Caco-2 (cell line): ENCODE measurements at regions of chr18 and their contacts with region 1.

Region 1: DNA sequence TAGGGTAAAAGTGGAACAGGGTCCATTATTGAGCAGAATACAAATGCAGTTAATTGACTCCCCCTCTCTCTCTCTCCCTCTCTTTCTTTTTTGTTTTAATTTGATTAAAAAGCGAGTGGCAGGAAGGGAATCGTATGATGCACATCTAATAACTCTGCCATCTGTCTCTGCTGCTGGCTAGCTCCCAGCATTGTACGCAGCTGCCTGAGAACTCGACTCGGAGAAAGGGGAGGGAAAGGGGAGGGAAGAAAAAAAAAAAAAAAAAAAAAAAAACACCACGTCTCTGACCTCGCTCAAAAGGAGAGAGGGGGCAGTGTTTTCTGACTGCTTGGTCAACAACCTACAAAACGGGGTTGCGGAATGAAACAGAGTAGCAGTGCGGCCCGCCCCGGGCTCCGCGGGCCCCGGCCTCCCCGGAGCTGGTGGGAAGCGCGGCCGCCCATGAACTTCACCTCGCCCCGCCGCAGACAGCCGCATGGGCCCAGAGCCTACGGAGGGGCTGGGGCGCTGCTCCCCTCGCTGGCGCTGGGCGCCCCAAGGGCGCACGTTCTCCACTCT is 265.7 kb downstream of the TCF4 start:
- DNase-seq: peak; percentile 61 to 65
- H3K4me3 ChIP-seq: peak overlapping the region; percentile 39
- H3K4me3 Mint-ChIP-seq: peak overlapping the region; percentile 89
- H3K27ac Mint-ChIP-seq: peak overlapping the region; percentile 70
- H3K4me1 ChIP-seq: peaks cover 6% of the 10 kb centered on the region
- H3K4me1 Mint-ChIP-seq: peaks cover 8% of the 10 kb centered on the region
- H3K27me3 ChIP-seq: no peaks in the 10 kb centered on the region
- H3K27me3 Mint-ChIP-seq: no peaks in the 10 kb centered on the region
- CTCF ChIP-seq: no peak

Region 2: DNA sequence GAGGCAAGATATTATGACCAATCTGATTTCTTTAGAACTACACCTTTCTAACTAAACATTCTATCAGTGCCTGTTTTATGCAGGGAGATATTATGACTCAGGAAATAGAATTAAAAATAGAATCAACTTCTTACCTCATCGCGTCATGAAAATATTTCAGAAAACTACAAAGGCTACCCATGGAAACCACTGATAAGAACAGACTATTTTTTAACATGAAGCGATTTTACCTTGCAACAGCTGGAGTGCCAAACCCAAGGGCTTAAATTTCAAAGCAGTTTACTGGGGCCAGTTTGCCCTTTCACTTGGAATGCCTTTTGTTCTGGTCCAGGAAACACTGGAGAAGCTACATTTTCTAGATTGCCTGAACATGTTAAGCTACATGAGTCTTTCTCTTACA is 58.1 kb before region 1 on chr18:
- CTCF ChIA-PET with region 1: no interaction called
- POLR2A ChIA-PET with region 1: interaction called, 4 read pairs
- intact Hi-C with region 1: loop called (anchors 5 kb)
- DNase-seq: peak; percentile 49 to 50
- H3K4me3 ChIP-seq: no peak overlapping the region
- H3K4me3 Mint-ChIP-seq: no peak overlapping the region
- H3K27ac Mint-ChIP-seq: peak overlapping the region; percentile 48
- H3K4me1 ChIP-seq: peaks cover 66% of the 10 kb centered on the region
- H3K4me1 Mint-ChIP-seq: peaks cover 8% of the 10 kb centered on the region
- H3K27me3 ChIP-seq: no peaks in the 10 kb centered on the region
- H3K27me3 Mint-ChIP-seq: no peaks in the 10 kb centered on the region
- CTCF ChIP-seq: no peak

Region 3: GRCh38 chr18:55275039-55275901 is 47.0 kb before region 1 on chr18:
- CTCF ChIA-PET with region 1: no interaction called
- POLR2A ChIA-PET with region 1: no interaction called
- intact Hi-C with region 1: loop called (anchors 5 kb)
- DNase-seq: peak in 1 of 2 experiments; percentile 37
- H3K4me3 ChIP-seq: no peak overlapping the region
- H3K4me3 Mint-ChIP-seq: no peak overlapping the region
- H3K27ac Mint-ChIP-seq: no peak overlapping the region
- H3K4me1 ChIP-seq: peaks cover 6% of the 10 kb centered on the region; the same call in 1 of the 2 replicates
- H3K4me1 Mint-ChIP-seq: no peaks in the 10 kb centered on the region
- H3K27me3 ChIP-seq: no peaks in the 10 kb centered on the region
- H3K27me3 Mint-ChIP-seq: no peaks in the 10 kb centered on the region
- CTCF ChIP-seq: no peak

Region 4: GRCh38 chr18:55384551-55385275 is 62.5 kb after region 1 on chr18:
- CTCF ChIA-PET with region 1: no interaction called
- POLR2A ChIA-PET with region 1: no interaction called
- intact Hi-C with region 1: no loop called
- DNase-seq: peak in 1 of 2 experiments; percentile 29
- H3K4me3 ChIP-seq: no peak overlapping the region
- H3K4me3 Mint-ChIP-seq: no peak overlapping the region
- H3K27ac Mint-ChIP-seq: no peak overlapping the region
- H3K4me1 ChIP-seq: no peaks in the 10 kb centered on the region
- H3K4me1 Mint-ChIP-seq: no peaks in the 10 kb centered on the region
- H3K27me3 ChIP-seq: no peaks in the 10 kb centered on the region
- H3K27me3 Mint-ChIP-seq: no peaks in the 10 kb centered on the region
- CTCF ChIP-seq: peak in 1 of 2 experiments; percentile 11